GM13976 (cell line): ENCODE measurements at regions of chr3 and their contacts with region 1.

Region 1: GRCh38 chr3:109023656-109024254 is 70.1 kb upstream of the GUCA1C start:
- DNase-seq: peak; percentile 33
- CTCF ChIP-seq: peak; percentile 69

Region 2: GRCh38 chr3:108669208-108669607 is 354.5 kb before region 1 on chr3:
- in situ Hi-C with region 1: no loop called
- DNase-seq: no peak
- CTCF ChIP-seq: no peak

Region 3: GRCh38 chr3:109081746-109082510 is 58.2 kb after region 1 on chr3:
- in situ Hi-C with region 1: loop called (anchors 10 kb)
- DNase-seq: peak; percentile 41
- CTCF ChIP-seq: peak; percentile 71

Region 4: DNA sequence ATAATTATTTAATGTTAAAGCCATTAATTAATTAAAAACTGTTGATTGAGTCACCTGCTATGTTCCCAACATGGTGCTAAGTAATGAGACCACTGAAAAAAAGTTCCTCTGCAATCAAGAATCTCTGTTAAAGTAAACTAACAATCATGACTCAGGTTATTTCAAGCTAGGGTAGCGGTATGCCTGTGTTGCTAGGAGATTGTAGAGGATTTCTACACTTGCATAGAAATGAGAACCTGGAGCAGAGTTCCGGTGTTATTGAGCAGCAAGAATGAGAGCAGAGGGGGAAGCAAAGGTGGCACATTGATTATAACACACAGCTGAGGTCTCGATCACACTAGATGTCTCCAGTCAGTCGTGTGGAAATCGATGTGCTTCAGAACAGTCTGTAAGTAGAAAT is 154.2 kb after region 1 on chr3:
- in situ Hi-C with region 1: no loop called
- DNase-seq: no peak
- CTCF ChIP-seq: no peak